Mammary epithelial cell (primary cell): ENCODE measurements at regions of chr3 and their contacts with region 1.

Region 1: DNA sequence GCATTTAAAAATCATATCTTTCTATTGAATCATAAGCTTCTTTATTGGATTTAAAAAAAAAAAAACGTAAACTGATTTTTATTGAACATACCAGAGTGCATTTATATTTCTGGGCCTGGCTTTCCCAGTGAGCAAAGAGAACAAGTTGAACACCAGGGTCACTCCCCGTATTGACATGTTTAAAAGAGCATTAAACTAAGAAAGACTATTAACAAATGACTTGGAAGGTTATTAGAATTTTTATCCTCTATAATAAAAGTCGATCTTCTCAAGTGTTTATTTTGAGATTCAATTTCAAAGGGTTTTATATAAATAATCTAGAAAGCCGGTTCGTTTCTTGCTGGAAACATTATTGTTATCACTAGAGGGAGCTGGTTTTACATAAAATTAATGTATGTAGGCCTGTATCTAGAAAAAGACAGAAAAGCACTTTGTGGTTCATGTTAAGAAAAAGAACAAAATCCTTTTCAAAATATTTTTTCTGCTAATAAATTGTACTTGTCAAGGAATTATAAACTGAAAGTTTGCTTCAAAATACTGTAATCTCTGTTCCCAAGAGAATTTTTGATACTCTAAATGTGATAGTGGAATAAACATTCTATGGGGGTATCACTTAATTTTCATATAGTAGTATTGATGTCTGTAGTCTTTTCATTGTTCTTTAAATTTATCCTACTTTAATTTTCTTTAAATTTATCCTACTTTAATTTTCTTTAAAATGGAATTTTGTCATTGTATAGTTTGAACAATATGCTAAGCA is 321.8 kb upstream of the MME start:
- DNase-seq: peak; percentile 10
- H3K4me3 ChIP-seq: no peak overlapping the region
- H3K27ac ChIP-seq: no peak overlapping the region
- H3K4me1 ChIP-seq: no peaks in the 10 kb centered on the region
- H3K27me3 ChIP-seq: peaks cover 3% of the 10 kb centered on the region
- CTCF ChIP-seq: peak; percentile 41 to 52

Region 2: DNA sequence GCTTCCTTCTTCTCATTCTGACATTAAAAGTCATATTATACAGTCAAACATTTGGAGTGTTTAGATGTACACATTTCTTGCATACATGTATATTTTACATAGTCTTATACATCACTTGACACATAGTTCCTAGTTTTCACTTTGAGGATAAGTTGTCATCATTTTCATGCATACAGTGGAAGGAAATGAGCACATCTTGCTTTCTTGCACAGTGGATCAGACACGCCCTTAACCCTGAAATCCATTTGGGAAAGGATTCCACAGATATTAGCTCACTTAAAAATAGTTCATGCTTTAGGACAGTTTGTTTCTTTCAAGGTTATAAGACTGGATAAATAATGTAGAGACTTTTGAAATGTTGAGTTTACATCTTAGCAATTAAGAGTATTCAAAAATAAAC is 173.2 kb after region 1 on chr3:
- CTCF ChIA-PET with region 1: no interaction called
- dilution Hi-C with region 1: no loop called
- in situ Hi-C with region 1: loop called in 1 of 2 experiments (anchors 25 kb)
- intact Hi-C with region 1: no loop called
- DNase-seq: peak; percentile 25
- H3K4me3 ChIP-seq: no peak overlapping the region
- H3K27ac ChIP-seq: no peak overlapping the region
- H3K4me1 ChIP-seq: peaks cover 7% of the 10 kb centered on the region
- H3K27me3 ChIP-seq: no peaks in the 10 kb centered on the region
- CTCF ChIP-seq: no peak

Region 3: GRCh38 chr3:154939334-154939733 is 181.0 kb after region 1 on chr3:
- CTCF ChIA-PET with region 1: no interaction called
- dilution Hi-C with region 1: no loop called
- in situ Hi-C with region 1: loop called in 1 of 2 experiments (anchors 25 kb)
- intact Hi-C with region 1: loop called (anchors 1 kb)
- DNase-seq: no peak
- H3K4me3 ChIP-seq: no peak overlapping the region
- H3K27ac ChIP-seq: no peak overlapping the region
- H3K4me1 ChIP-seq: no peaks in the 10 kb centered on the region
- H3K27me3 ChIP-seq: no peaks in the 10 kb centered on the region
- CTCF ChIP-seq: peak in 1 of 2 donors; percentile 21

Region 4: DNA sequence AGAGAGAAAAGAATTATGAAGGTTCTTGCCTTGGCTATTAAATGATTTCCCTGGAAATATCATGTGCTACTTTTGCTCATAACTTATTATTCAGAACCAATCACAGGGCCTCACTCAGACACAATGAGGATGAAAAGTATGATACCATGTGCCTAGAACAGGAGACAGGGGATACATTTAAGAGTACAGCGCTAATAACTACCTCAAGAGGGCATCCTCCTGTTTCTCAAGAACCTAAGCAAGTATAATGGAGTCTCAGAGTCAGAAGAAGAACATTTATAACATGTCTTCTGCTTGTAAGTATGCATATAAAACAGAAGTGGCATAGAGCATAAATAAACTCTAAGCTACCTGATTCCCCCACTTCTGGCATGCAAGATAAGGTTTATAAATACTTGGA is 196.5 kb after region 1 on chr3:
- CTCF ChIA-PET with region 1: no interaction called
- dilution Hi-C with region 1: no loop called
- in situ Hi-C with region 1: loop called in 1 of 2 experiments (anchors 25 kb)
- intact Hi-C with region 1: loop called (anchors 1 kb)
- DNase-seq: peak; percentile 40
- H3K4me3 ChIP-seq: no peak overlapping the region
- H3K27ac ChIP-seq: no peak overlapping the region
- H3K4me1 ChIP-seq: no peaks in the 10 kb centered on the region
- H3K27me3 ChIP-seq: no peaks in the 10 kb centered on the region
- CTCF ChIP-seq: peak; percentile 59 to 78

Region 5: GRCh38 chr3:155079746-155080487 is 321.6 kb after region 1 on chr3 and contains the start of gene MME:
- CTCF ChIA-PET with region 1: no interaction called
- dilution Hi-C with region 1: no loop called
- in situ Hi-C with region 1: no loop called
- intact Hi-C with region 1: loop called (anchors 5 kb)
- DNase-seq: peak; percentile 69
- H3K4me3 ChIP-seq: peak within 1 kb of the TSS; percentile 77 to 87 (median 86)
- H3K27ac ChIP-seq: no peak within 1 kb of the TSS
- H3K4me1 ChIP-seq: peaks cover 16% of the 10 kb centered on the region
- H3K27me3 ChIP-seq: no peaks in the 10 kb centered on the region
- CTCF ChIP-seq: no peak
- total RNA-seq, gene MME: 22.5 to 94.5 TPM

Region 6: DNA sequence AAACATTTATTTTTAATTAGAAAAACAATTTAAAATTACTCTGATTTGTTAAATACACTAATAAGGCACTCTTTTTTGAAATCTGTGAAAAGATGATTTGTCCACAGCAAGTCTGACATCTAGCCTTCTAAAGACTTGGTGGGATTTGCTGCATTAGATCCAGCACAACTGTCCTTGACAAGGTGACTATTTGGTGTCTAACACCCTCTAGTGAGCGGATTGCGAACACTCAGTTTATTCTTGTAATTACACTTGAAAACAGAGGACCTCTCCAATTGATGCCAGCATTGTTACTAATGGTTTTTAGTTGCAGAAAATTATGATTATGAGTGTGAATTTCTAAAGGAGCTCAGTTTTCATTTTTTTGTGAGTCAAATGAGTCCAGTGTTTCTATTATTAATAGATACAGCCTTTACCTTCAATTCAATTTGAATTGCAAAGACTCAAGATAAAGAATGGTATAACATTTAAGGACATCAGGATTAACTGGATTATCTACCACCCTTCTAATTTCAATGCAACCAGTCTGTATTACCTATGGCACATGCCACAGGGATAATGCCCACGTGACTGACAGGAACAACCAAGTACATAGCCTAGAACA is 564.9 kb after region 1 on chr3:
- CTCF ChIA-PET with region 1: no interaction called
- dilution Hi-C with region 1: no loop called
- in situ Hi-C with region 1: loop called (anchors 10 kb)
- intact Hi-C with region 1: loop called (anchors 1 kb)
- DNase-seq: peak; percentile 51
- H3K4me3 ChIP-seq: no peak overlapping the region
- H3K27ac ChIP-seq: no peak overlapping the region
- H3K4me1 ChIP-seq: no peaks in the 10 kb centered on the region
- H3K27me3 ChIP-seq: no peaks in the 10 kb centered on the region
- CTCF ChIP-seq: peak; percentile 72 to 78

Region 7: GRCh38 chr3:155791190-155791589 is 1032.9 kb after region 1 on chr3:
- CTCF ChIA-PET with region 1: interaction called, 11 read pairs
- dilution Hi-C with region 1: no loop called
- in situ Hi-C with region 1: no loop called
- intact Hi-C with region 1: no loop called
- DNase-seq: peak; percentile 26
- H3K4me3 ChIP-seq: no peak overlapping the region
- H3K27ac ChIP-seq: no peak overlapping the region
- H3K4me1 ChIP-seq: no peaks in the 10 kb centered on the region
- H3K27me3 ChIP-seq: no peaks in the 10 kb centered on the region
- CTCF ChIP-seq: no peak